Heart left ventricle (tissue), 16 donors: ENCODE measurements at regions of chr22 and their contacts with region 1.

Region 1: GRCh38 chr22:36387752-36388518 is at the start of gene MYH9:
- DNase-seq: peak; percentile 100
- ATAC-seq: peak; percentile 94 to 98 (median 96)
- H3K4me3 ChIP-seq: peak within 1 kb of the TSS; percentile 72 to 99 (median 96)
- H3K27ac ChIP-seq: peak within 1 kb of the TSS; percentile 95 to 99 (median 98)
- H3K4me1 ChIP-seq: peaks cover 5 to 62% (median 30%) of the 10 kb centered on the region in 12 donors
- H3K27me3 ChIP-seq: no peaks in the 10 kb centered on the region
- CTCF ChIP-seq: no peak
- POLR2A ChIP-seq: peak; percentile 100
- total RNA-seq, gene MYH9: 126 to 482 (median 238) TPM

Region 2: DNA sequence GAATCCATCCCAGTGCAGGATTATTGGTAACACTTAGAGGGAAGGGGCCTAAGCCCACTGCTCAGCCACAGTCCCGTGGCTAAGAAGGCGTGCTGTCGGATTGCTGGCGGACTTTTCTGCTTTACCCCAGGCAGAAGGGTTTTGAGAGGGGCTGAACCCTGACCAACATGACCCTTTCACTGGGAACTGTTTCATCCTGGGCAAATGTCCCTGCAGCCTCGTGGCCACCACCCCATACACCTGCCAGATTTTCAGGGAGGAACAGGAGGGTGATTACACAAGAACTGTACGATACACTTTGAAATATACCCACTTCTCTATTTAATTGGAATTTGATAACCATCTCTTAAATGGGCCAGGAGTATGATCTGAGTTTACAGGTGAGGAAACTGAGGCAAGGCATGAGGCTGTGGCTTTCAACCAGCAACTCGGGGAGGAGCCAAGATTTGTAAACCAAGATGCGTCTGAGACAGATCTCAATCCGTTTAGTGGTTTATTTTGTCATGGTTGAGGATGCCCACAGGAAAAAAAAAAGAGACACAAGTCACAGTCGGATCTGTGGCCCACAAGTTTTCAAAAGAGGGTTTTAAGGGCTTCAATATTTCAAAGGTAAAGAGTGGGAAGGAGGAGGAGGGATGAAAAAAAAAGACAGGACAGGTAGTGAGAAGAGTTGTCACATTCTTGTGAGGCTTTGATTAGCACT is 221.3 kb before region 1 on chr22:
- intact Hi-C with region 1: no loop called
- DNase-seq: no peak
- ATAC-seq: no peak
- H3K4me3 ChIP-seq: no peak overlapping the region
- H3K27ac ChIP-seq: no peak overlapping the region
- H3K4me1 ChIP-seq: peaks cover 0 to 39% (median 2%) of the 10 kb centered on the region in 12 donors
- H3K27me3 ChIP-seq: no peaks in the 10 kb centered on the region
- CTCF ChIP-seq: no peak
- POLR2A ChIP-seq: no peak

Region 3: GRCh38 chr22:36331306-36331911 is 56.5 kb before region 1 on chr22:
- intact Hi-C with region 1: loop called in 9 of 10 experiments (anchors 2 to 5 kb)
- DNase-seq: peak; percentile 87 to 94 (median 87)
- ATAC-seq: peak; percentile 32 to 61 (median 52)
- H3K4me3 ChIP-seq: peak overlapping the region in 6 of 12 donors; percentile 5 to 44 (median 15)
- H3K27ac ChIP-seq: peak overlapping the region; percentile 89 to 100 (median 94)
- H3K4me1 ChIP-seq: peaks cover 70 to 100% (median 100%) of the 10 kb centered on the region in 12 donors
- H3K27me3 ChIP-seq: no peaks in the 10 kb centered on the region
- CTCF ChIP-seq: no peak
- POLR2A ChIP-seq: peak in 1 of 2 donors; percentile 38

Region 4: DNA sequence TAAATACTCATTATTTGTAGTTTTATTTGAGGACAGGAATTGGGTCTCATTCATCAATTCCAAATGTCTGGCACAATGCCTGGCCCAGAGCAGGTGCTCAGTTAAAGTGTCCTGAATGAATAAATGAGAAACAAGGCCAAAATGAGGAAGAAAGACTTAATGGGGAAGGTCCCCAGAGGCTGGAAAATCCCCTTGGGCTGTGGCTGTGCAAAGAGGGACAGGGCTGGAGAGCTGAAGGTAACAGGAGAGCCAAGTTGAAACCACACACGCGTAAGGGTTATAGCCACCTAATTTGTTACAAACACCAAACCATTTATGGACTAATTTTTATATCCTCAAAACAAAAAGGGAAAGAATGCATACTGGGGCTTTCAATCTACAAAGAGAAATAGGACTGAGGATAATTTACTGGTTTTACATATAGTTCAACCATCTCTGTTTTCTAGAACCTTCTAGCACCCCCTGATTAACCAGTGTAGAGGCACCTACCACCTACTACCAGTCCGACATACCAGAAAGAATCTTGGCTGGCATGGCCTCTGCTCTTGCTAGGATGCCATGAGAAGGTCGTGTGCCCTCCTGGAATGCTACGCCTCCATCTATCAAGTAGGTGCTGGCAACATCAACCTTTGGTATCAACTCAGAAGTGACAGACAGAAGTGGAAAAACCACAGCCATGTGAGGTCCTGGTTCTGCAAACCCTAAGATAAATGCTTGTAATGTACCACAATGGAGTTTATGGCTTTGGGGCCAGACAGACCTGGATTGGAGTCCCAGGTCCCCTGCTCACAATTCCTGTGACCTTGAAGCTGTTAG is 28.5 kb before region 1 on chr22:
- intact Hi-C with region 1: loop called in 1 of 10 experiments (anchors 2 kb)
- DNase-seq: peak in 2 of 5 donors; percentile 69 to 71
- ATAC-seq: peak; percentile 31 to 59 (median 40)
- H3K4me3 ChIP-seq: no peak overlapping the region
- H3K27ac ChIP-seq: peak overlapping the region; percentile 20 to 99 (median 88)
- H3K4me1 ChIP-seq: peaks cover 46 to 100% (median 94%) of the 10 kb centered on the region in 12 donors
- H3K27me3 ChIP-seq: no peaks in the 10 kb centered on the region
- CTCF ChIP-seq: no peak
- POLR2A ChIP-seq: no peak

Region 5: GRCh38 chr22:36454916-36455570 is 67.1 kb after region 1 on chr22:
- intact Hi-C with region 1: loop called in 8 of 10 experiments (anchors 2 to 10 kb)
- DNase-seq: peak; percentile 94 to 97 (median 95)
- ATAC-seq: peak; percentile 83 to 91 (median 87)
- H3K4me3 ChIP-seq: peak overlapping the region; percentile 15 to 67 (median 50)
- H3K27ac ChIP-seq: peak overlapping the region; percentile 81 to 99 (median 93)
- H3K4me1 ChIP-seq: peaks cover 15 to 76% (median 53%) of the 10 kb centered on the region in 12 donors
- H3K27me3 ChIP-seq: no peaks in the 10 kb centered on the region
- CTCF ChIP-seq: peak in 2 of 12 donors; percentile 32 to 45
- POLR2A ChIP-seq: peak; percentile 60 to 84

Region 6: GRCh38 chr22:36577019-36577418 is 189.1 kb after region 1 on chr22:
- intact Hi-C with region 1: no loop called
- DNase-seq: no peak
- ATAC-seq: no peak
- H3K4me3 ChIP-seq: no peak overlapping the region
- H3K27ac ChIP-seq: no peak overlapping the region
- H3K4me1 ChIP-seq: no peaks in the 10 kb centered on the region
- H3K27me3 ChIP-seq: peaks cover 0 to 25% (median 0%) of the 10 kb centered on the region in 9 donors
- CTCF ChIP-seq: no peak
- POLR2A ChIP-seq: no peak